MCF 10A (cell line): ENCODE measurements at regions of chr14 and their contacts with region 1.

Region 1: GRCh38 chr14:32382704-32383103 is 53.6 kb downstream of the AKAP6 start:
- DNase-seq: peak; percentile 38
- H3K4me3 Mint-ChIP-seq: no peak overlapping the region
- H3K27ac Mint-ChIP-seq: no peak overlapping the region
- H3K4me1 Mint-ChIP-seq: peaks cover 27% of the 10 kb centered on the region
- H3K27me3 Mint-ChIP-seq: no peaks in the 10 kb centered on the region
- CTCF ChIP-seq: peak; percentile 75

Region 2: GRCh38 chr14:31510222-31510621 is 872.5 kb before region 1 on chr14:
- CTCF ChIA-PET with region 1: interaction called, 5 read pairs
- POLR2A ChIA-PET with region 1: no interaction called
- intact Hi-C with region 1: loop called (anchors 5 kb)
- DNase-seq: peak; percentile 43
- H3K4me3 Mint-ChIP-seq: no peak overlapping the region
- H3K27ac Mint-ChIP-seq: no peak overlapping the region
- H3K4me1 Mint-ChIP-seq: peaks cover 8% of the 10 kb centered on the region
- H3K27me3 Mint-ChIP-seq: no peaks in the 10 kb centered on the region
- CTCF ChIP-seq: peak; percentile 44

Region 3: GRCh38 chr14:32121948-32122347 is 260.8 kb before region 1 on chr14:
- CTCF ChIA-PET with region 1: no interaction called
- POLR2A ChIA-PET with region 1: no interaction called
- intact Hi-C with region 1: no loop called
- DNase-seq: no peak
- H3K4me3 Mint-ChIP-seq: no peak overlapping the region
- H3K27ac Mint-ChIP-seq: no peak overlapping the region
- H3K4me1 Mint-ChIP-seq: peaks cover 28% of the 10 kb centered on the region
- H3K27me3 Mint-ChIP-seq: no peaks in the 10 kb centered on the region
- CTCF ChIP-seq: no peak

Region 4: GRCh38 chr14:32202998-32203882 is 179.5 kb before region 1 on chr14 and contains the start of gene RNU6-8:
- CTCF ChIA-PET with region 1: no interaction called
- POLR2A ChIA-PET with region 1: no interaction called
- intact Hi-C with region 1: loop called (anchors 2 kb)
- DNase-seq: peak; percentile 87
- H3K4me3 Mint-ChIP-seq: peak within 1 kb of the TSS; percentile 89
- H3K27ac Mint-ChIP-seq: peak within 1 kb of the TSS; percentile 98
- H3K4me1 Mint-ChIP-seq: peaks cover 21% of the 10 kb centered on the region
- H3K27me3 Mint-ChIP-seq: no peaks in the 10 kb centered on the region
- CTCF ChIP-seq: no peak
- total RNA-seq, gene RNU6-8: not detected in 2 replicates

Region 5: GRCh38 chr14:32396885-32397284 is 14.2 kb after region 1 on chr14:
- CTCF ChIA-PET with region 1: interaction called, 10 read pairs
- POLR2A ChIA-PET with region 1: no interaction called
- intact Hi-C with region 1: no loop called
- DNase-seq: no peak
- H3K4me3 Mint-ChIP-seq: no peak overlapping the region
- H3K27ac Mint-ChIP-seq: no peak overlapping the region
- H3K4me1 Mint-ChIP-seq: peaks cover 7% of the 10 kb centered on the region
- H3K27me3 Mint-ChIP-seq: no peaks in the 10 kb centered on the region
- CTCF ChIP-seq: no peak

Region 6: GRCh38 chr14:32509632-32510187 is 127.0 kb after region 1 on chr14:
- CTCF ChIA-PET with region 1: interaction called, 5 read pairs
- POLR2A ChIA-PET with region 1: interaction called, 3 read pairs
- intact Hi-C with region 1: loop called (anchors 1 kb)
- DNase-seq: peak; percentile 94
- H3K4me3 Mint-ChIP-seq: peak overlapping the region; percentile 65
- H3K27ac Mint-ChIP-seq: peak overlapping the region; percentile 93
- H3K4me1 Mint-ChIP-seq: peaks cover 50% of the 10 kb centered on the region
- H3K27me3 Mint-ChIP-seq: no peaks in the 10 kb centered on the region
- CTCF ChIP-seq: no peak

Region 7: GRCh38 chr14:32567602-32568384 is 185.1 kb after region 1 on chr14:
- CTCF ChIA-PET with region 1: no interaction called
- POLR2A ChIA-PET with region 1: no interaction called
- intact Hi-C with region 1: no loop called
- DNase-seq: no peak
- H3K4me3 Mint-ChIP-seq: no peak overlapping the region
- H3K27ac Mint-ChIP-seq: no peak overlapping the region
- H3K4me1 Mint-ChIP-seq: peaks cover 19% of the 10 kb centered on the region
- H3K27me3 Mint-ChIP-seq: no peaks in the 10 kb centered on the region
- CTCF ChIP-seq: no peak